ENCODE measurements at regions of chrX and their contacts with region 1.

Region 1: DNA sequence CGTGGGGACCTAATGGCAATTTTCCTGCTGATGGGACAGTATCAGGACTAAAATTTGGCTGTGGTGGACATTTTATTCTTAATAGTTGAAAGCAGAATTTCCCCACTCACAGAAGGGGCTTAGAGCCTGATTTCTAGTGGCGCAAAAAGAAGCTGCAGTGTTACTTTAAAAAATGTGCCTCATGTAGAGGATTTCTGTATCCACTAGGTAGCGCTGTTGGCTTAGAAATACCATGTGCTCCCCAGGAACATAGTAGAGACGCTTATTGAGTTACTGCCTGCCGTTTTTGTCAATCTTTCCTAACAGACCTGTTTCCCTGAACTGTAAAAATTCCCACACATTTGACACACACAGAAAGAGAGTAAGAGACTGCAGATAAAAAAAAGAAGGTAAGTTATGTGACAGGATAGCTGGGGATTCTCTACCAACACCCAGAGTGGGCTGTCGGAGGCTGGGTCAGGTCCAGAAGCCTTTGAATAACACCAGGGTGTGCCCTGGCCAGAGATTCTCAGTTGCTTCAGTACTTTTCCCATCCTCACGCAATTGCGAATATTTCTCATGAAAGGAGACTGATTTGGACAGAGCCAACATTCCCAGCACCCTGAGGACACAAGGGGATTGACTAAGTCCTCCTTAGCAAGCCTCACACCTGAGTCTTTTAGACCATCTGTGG is 88.4 kb downstream of the ZXDA start:
- DNase-seq: peak; percentile 64
- ATAC-seq: peak; percentile 31
- H3K4me3 ChIP-seq: no peak overlapping the region
- H3K4me3 Mint-ChIP-seq: peak overlapping the region; percentile 2
- H3K27ac ChIP-seq: no peak overlapping the region
- H3K27ac Mint-ChIP-seq: no peak overlapping the region
- H3K4me1 ChIP-seq: no peaks in the 10 kb centered on the region
- H3K4me1 Mint-ChIP-seq: peaks cover 2% of the 10 kb centered on the region
- H3K27me3 ChIP-seq: no peaks in the 10 kb centered on the region
- H3K27me3 Mint-ChIP-seq: no peaks in the 10 kb centered on the region
- CTCF ChIP-seq: peak; percentile 68

Region 2: DNA sequence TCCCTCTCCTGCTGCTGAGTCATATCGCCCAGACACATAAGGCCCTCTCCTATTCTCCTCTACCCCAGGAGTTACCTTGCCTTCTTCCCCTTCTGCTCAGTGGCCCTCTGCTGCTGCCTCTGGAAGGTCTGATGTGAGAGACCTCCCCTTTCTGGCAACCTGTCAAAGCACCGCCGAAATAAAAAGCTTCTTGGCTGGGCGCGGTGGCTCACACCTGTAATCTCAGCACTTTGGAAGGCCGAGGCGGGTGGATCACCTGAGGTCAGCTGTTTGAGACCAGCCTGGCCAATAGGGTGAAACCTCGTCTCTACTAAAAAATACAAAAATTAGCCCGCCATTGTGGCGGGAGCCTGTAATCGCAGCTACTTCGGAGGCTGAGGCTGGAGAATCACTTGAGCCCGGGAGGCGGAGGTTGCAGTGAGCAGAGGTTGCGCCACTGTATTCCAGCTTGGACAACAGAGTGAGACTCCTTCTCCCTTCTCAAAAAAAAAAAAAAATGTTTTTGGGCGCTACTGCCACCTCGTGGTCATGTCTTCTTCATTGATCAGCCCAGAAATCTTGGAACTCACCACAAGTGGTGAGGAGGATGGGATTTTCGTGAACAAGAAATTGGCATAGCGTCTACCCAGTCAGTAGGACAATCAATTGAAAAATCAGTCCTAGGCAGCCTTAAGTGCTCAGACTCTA is 97.1 kb after region 1 on chrX:
- CTCF ChIA-PET with region 1: interaction called, 10 read pairs
- POLR2A ChIA-PET with region 1: no interaction called
- intact Hi-C with region 1: loop called (anchors 1 kb)
- DNase-seq: peak; percentile 50
- ATAC-seq: no peak
- H3K4me3 ChIP-seq: no peak overlapping the region
- H3K4me3 Mint-ChIP-seq: no peak overlapping the region
- H3K27ac ChIP-seq: no peak overlapping the region
- H3K27ac Mint-ChIP-seq: no peak overlapping the region
- H3K4me1 ChIP-seq: no peaks in the 10 kb centered on the region
- H3K4me1 Mint-ChIP-seq: peaks cover 5% of the 10 kb centered on the region
- H3K27me3 ChIP-seq: no peaks in the 10 kb centered on the region
- H3K27me3 Mint-ChIP-seq: no peaks in the 10 kb centered on the region
- CTCF ChIP-seq: peak; percentile 46

Region 3: GRCh38 chrX:58025979-58026378 is 204.1 kb after region 1 on chrX:
- CTCF ChIA-PET with region 1: interaction called, 13 read pairs
- POLR2A ChIA-PET with region 1: no interaction called
- intact Hi-C with region 1: loop called (anchors 1 kb)
- DNase-seq: peak; percentile 55
- ATAC-seq: no peak
- H3K4me3 ChIP-seq: no peak overlapping the region
- H3K4me3 Mint-ChIP-seq: no peak overlapping the region
- H3K27ac ChIP-seq: no peak overlapping the region
- H3K27ac Mint-ChIP-seq: no peak overlapping the region
- H3K4me1 ChIP-seq: no peaks in the 10 kb centered on the region
- H3K4me1 Mint-ChIP-seq: no peaks in the 10 kb centered on the region
- H3K27me3 ChIP-seq: no peaks in the 10 kb centered on the region
- H3K27me3 Mint-ChIP-seq: no peaks in the 10 kb centered on the region
- CTCF ChIP-seq: peak; percentile 61